WTC11 (cell line): ENCODE measurements at regions of chr17 and their contacts with region 1.

Region 1: DNA sequence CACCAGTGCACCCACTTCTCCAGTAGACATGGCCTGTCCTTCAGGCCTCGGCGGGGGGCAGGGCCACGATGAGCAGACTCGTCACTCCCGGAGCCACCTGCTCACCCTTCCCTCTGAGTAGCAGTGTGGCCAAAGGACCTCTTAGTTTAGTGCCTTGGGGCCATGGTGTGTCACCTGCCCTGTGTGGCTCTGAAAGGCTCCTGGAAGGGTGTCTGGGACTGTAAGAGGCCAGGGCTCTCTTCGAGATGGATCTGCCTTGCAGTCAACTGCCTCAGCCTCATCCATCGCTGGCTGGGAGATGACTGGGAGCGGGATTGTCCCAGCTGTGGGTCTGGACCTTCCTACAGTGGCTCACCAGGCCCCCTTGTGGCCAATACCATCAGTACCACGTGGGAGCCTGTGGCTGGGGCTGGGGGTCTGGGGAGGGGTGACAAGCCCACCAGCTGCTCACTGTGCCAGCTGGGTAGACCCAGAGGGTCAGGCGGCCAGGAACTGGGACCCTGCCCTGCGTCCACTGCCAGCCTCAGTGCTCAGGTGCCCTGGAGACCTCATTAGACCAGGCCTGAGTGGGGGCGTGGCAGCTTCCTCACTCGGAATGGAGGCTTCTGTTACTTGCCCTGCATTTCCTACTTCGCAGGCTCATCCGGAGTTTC is 133.4 kb downstream of the OR1D5 start:
- DNase-seq: peak; percentile 89
- ATAC-seq: peak; percentile 90
- H3K4me3 Mint-ChIP-seq: no peak overlapping the region
- H3K27ac Mint-ChIP-seq: 0 out of 2 replicates have a peak overlapping the region, but pooled peaks have one; percentile 58
- H3K4me1 Mint-ChIP-seq: peaks cover 41% of the 10 kb centered on the region
- H3K27me3 Mint-ChIP-seq: no peaks in the 10 kb centered on the region
- CTCF ChIP-seq: peak; percentile 84

Region 2: GRCh38 chr17:2853111-2853721 is 76.8 kb before region 1 on chr17:
- CTCF ChIA-PET with region 1: interaction called, 114 read pairs
- POLR2A ChIA-PET with region 1: interaction called, 8 read pairs
- DNase-seq: peak; percentile 71
- ATAC-seq: peak; percentile 3
- H3K4me3 Mint-ChIP-seq: peak overlapping the region; percentile 51
- H3K27ac Mint-ChIP-seq: no peak overlapping the region
- H3K4me1 Mint-ChIP-seq: peaks cover 46% of the 10 kb centered on the region
- H3K27me3 Mint-ChIP-seq: no peaks in the 10 kb centered on the region
- CTCF ChIP-seq: no peak

Region 3: DNA sequence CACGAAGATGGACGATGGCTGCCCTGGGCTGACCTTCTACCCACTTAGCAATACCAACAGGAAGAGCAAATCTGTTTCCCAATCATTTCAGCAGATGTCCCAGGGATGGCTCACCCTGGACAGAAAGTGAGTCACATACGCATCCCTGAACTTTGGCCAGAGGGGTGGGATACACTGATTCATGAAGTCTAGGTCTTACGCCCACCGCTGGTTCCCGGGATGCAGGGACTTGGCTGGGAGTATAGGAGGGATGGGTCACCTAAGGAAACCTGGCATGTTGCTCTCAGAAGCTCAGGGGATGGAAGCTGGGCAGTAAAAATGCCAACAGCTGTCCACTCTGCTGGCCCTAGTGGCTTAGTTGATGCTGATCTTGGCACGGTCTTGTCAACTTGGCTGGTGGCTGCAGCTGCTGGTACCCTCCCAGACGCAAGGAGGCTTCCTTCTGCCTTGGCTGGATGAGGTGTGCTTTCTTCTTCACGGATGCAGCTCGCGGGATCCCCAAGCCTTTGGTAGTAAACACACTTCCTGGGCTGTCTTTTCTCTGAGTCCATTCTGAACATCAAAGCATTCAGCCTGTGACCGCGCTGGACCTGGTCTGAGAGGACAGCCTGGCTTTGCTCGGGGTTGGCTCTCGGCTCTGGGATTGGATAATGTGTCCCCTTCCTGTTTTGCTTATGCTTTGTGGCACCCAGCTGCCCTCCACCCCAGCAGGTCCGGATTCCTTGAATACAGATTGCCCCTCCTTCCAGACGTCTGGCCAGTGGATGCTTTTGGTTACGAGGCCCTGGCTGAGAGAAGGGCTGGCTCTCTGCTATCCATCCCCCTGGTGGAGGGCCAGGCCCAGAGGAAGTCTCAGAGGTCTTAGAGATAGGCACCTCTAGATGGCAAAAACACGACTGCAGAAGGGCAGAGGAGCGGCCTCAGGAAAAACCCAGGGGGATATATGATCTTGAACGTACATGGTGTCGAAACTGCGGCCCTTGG is 62.3 kb before region 1 on chr17:
- CTCF ChIA-PET with region 1: interaction called, 19 read pairs
- POLR2A ChIA-PET with region 1: no interaction called
- DNase-seq: peak; percentile 53
- ATAC-seq: peak; percentile 57
- H3K4me3 Mint-ChIP-seq: no peak overlapping the region
- H3K27ac Mint-ChIP-seq: peak overlapping the region; percentile 97
- H3K4me1 Mint-ChIP-seq: peaks cover 85% of the 10 kb centered on the region
- H3K27me3 Mint-ChIP-seq: no peaks in the 10 kb centered on the region
- CTCF ChIP-seq: no peak

Region 4: DNA sequence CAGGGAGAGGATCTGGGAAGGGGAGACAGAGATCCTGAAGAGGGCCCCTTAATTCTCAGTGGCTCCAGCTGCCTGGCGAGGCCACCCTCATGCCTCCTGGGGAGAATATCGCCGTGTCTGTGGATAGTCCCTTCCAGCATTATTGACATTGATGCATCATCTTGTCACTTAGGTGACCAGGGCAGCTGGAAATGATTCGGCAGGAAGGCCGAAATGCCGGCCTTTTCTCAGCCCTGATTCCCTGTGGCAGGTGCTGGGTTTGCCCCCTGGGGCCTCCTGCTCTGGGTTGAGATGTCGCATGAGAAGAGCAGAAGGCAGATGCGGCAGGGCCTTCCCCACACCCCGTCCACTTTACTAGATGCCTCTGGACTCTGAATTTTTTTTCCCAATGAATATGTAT is 44.3 kb before region 1 on chr17:
- CTCF ChIA-PET with region 1: interaction called, 10 read pairs
- POLR2A ChIA-PET with region 1: no interaction called
- DNase-seq: no peak
- ATAC-seq: no peak
- H3K4me3 Mint-ChIP-seq: no peak overlapping the region
- H3K27ac Mint-ChIP-seq: peak overlapping the region; percentile 60; the same call in 1 of the 2 replicates
- H3K4me1 Mint-ChIP-seq: peaks cover 57% of the 10 kb centered on the region
- H3K27me3 Mint-ChIP-seq: no peaks in the 10 kb centered on the region
- CTCF ChIP-seq: no peak